H1 (cell line): ENCODE measurements at regions of chr6 and their contacts with region 1.

Region 1: DNA sequence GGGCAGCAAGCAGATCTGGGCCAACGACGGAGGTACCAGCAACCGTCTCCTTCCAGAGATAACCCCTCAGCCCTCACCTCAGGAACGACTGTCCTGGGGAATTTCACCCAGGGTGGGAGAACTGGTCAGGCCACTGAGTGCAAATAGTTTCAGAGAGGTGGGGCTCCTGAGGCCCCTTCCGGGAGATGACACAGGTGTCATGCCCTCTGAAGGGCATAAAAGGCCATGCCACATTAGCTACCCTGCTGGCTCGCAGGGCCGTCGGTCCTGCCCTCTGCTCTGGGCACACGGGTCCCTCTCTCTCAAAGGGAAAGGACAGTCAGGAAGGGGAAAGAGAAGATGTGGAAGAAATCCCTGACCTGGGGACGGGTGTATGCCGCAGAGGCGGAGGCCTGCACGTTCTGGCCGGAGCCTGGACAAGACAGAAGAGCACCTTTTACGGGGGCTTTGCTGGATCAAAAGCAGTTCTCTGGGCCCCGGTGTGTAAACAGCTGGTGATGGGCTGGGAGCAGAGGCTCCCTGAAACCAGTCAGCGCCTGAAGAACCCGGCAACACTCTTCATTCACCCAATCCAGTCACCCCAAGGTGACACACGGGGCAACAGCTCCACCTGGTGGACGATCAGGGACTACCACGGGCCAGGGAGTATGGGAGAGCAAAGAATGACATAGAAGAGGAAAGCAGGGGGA is 6.4 kb upstream of the TAF8 start:
- DNase-seq: peak; percentile 66 to 98
- H3K4me3 ChIP-seq: no peak overlapping the region
- H3K27ac ChIP-seq: no peak overlapping the region
- H3K4me1 ChIP-seq: peaks cover 9 to 23% (median 13%) of the 10 kb centered on the region in 4 experiments
- H3K27me3 ChIP-seq: peaks cover 34 to 60% (median 51%) of the 10 kb centered on the region in 4 experiments
- CTCF ChIP-seq: peak in 2 of 3 experiments; percentile 97 to 98; a peak in 3 of 4 replicates
- EP300 ChIP-seq: no peak
- POLR2A ChIP-seq: no peak
- RAD21 ChIP-seq: peak; percentile 100

Region 2: GRCh38 chr6:41781428-41781730 is 262.6 kb before region 1 on chr6:
- CTCF ChIA-PET with region 1: interaction called, 108 read pairs
- POLR2A ChIA-PET with region 1: interaction called, 4 read pairs
- DNase-seq: no peak
- H3K4me3 ChIP-seq: peak overlapping the region in 3 of 4 experiments; percentile 33 to 85 (median 76); a peak in 5 of 8 replicates
- H3K27ac ChIP-seq: no peak overlapping the region
- H3K4me1 ChIP-seq: peaks cover 4 to 10% (median 7%) of the 10 kb centered on the region in 4 experiments; a peak in 4 of 7 replicates
- H3K27me3 ChIP-seq: peaks cover 2 to 39% (median 25%) of the 10 kb centered on the region in 4 experiments
- CTCF ChIP-seq: no peak
- EP300 ChIP-seq: no peak
- POLR2A ChIP-seq: no peak
- RAD21 ChIP-seq: no peak

Region 3: GRCh38 chr6:41846666-41847237 is 197.2 kb before region 1 on chr6:
- CTCF ChIA-PET with region 1: interaction called, 29 read pairs
- POLR2A ChIA-PET with region 1: no interaction called
- DNase-seq: peak; percentile 3 to 77
- H3K4me3 ChIP-seq: no peak overlapping the region
- H3K27ac ChIP-seq: no peak overlapping the region
- H3K4me1 ChIP-seq: no peaks in the 10 kb centered on the region
- H3K27me3 ChIP-seq: no peaks in the 10 kb centered on the region
- CTCF ChIP-seq: peak in 2 of 3 experiments; percentile 70 to 85; a peak in 3 of 4 replicates
- EP300 ChIP-seq: no peak
- POLR2A ChIP-seq: no peak
- RAD21 ChIP-seq: peak; percentile 83 to 88

Region 4: GRCh38 chr6:41929924-41930323 is 114.0 kb before region 1 on chr6:
- CTCF ChIA-PET with region 1: interaction called, 219 read pairs
- POLR2A ChIA-PET with region 1: interaction called, 157 read pairs
- DNase-seq: no peak
- H3K4me3 ChIP-seq: no peak overlapping the region
- H3K27ac ChIP-seq: no peak overlapping the region
- H3K4me1 ChIP-seq: no peaks in the 10 kb centered on the region
- H3K27me3 ChIP-seq: no peaks in the 10 kb centered on the region
- CTCF ChIP-seq: no peak
- EP300 ChIP-seq: no peak
- POLR2A ChIP-seq: no peak; a peak in 1 of 3 replicates
- RAD21 ChIP-seq: no peak

Region 5: DNA sequence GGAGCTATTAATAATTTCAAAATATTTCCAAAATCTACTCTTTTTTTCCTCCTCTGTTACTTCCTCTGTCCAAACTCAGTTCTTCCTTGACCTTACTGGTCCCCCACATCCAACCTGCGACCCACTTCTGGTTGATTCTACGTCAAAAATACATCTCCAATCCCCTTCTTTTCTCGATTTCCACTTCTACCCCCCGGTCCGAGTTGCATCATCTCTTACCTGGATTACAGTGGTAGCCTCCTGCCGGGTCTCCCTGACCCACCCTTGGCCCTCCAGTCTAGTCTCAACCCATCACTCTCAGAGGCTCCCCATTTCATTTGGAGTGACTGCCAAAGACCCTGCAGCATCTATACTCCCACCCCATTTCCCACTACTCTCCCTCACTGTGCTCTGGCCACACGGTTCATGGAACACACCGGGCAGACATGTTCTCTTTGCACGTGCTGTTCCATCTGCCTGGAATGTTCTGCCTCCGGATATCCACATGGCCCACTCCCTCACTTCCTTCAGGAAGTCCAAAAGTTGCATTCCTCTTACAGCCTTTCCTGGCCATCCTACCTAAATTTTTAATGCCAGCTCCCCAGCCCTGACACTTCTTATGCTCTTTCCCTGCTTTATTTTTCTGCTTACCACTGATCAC is 96.2 kb before region 1 on chr6:
- CTCF ChIA-PET with region 1: interaction called, 219 read pairs
- POLR2A ChIA-PET with region 1: interaction called, 157 read pairs
- DNase-seq: no peak
- H3K4me3 ChIP-seq: no peak overlapping the region
- H3K27ac ChIP-seq: no peak overlapping the region
- H3K4me1 ChIP-seq: no peaks in the 10 kb centered on the region
- H3K27me3 ChIP-seq: no peaks in the 10 kb centered on the region; a peak in 1 of 7 replicates
- CTCF ChIP-seq: no peak
- EP300 ChIP-seq: no peak
- POLR2A ChIP-seq: no peak
- RAD21 ChIP-seq: no peak

Region 6: GRCh38 chr6:41996997-41997396 is 46.9 kb before region 1 on chr6:
- CTCF ChIA-PET with region 1: interaction called, 11 read pairs
- POLR2A ChIA-PET with region 1: interaction called, 3 read pairs
- DNase-seq: no peak
- H3K4me3 ChIP-seq: no peak overlapping the region
- H3K27ac ChIP-seq: no peak overlapping the region
- H3K4me1 ChIP-seq: no peaks in the 10 kb centered on the region
- H3K27me3 ChIP-seq: no peaks in the 10 kb centered on the region
- CTCF ChIP-seq: no peak
- EP300 ChIP-seq: no peak
- POLR2A ChIP-seq: no peak
- RAD21 ChIP-seq: no peak